Activated T-helper 2 cell treated with anti-CD3 and anti-CD28 coated beads, Interferon-gamma antibody, Interleukin-2, Interleukin-4, amounts not matched to agents 10 μg/mL and 5 μg/mL and 100 μg/mL, durations not matched to agents 14 hours and 24 hours and 36 hours (primary cell): ENCODE measurements at regions of chr12 and their contacts with region 1.

Region 1: DNA sequence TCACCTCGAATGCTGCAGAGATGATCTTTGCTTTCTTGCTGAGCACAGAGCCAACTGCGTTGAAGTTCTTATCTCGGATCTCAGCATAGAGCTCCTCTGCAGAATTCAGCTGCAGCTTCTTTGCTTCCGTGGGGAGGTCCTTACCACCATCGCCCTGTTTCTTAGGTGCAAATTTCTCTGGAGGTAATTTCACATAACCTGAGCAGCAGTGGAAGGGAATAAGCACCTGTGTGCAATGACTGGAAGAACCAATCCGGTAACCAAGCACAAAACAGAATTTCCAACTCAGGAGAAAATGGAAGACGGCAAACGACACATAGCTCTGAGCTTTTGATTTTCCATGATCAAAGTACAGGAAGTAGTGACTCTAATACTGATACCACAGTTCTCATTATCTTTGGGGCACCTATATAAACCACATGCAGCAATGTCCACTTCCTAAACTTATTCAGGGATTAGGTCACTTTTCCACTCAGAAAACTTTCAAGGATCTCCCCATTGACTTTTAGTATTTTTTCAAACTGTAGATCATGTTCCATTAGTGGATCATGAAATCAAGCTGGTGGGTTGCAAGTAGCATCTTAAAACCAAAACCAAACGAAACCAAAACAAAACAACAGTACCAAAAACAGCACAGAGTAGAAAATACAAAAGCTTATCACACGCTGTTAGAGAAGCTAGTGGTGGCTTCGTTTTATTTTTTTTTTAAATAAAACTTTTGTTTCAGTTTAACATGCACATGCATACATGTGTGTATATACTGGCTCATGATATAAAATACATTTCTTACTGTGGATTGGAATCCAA is 18.9 kb upstream of the DIABLO start:
- DNase-seq: peak; percentile 26
- H3K4me3 Mint-ChIP-seq: peak overlapping the region; percentile 75
- H3K27ac Mint-ChIP-seq: peak overlapping the region; percentile 93
- H3K4me1 Mint-ChIP-seq: peaks cover 18% of the 10 kb centered on the region
- H3K27me3 Mint-ChIP-seq: no peaks in the 10 kb centered on the region

Region 2: GRCh38 chr12:122265931-122266771 is 21.4 kb after region 1 on chr12 and contains the start of gene VPS33A:
- intact Hi-C with region 1: loop called (anchors 2 kb)
- DNase-seq: peak; percentile 95
- H3K4me3 Mint-ChIP-seq: peak within 1 kb of the TSS; percentile 96
- H3K27ac Mint-ChIP-seq: peak within 1 kb of the TSS; percentile 99
- H3K4me1 Mint-ChIP-seq: peaks cover 7% of the 10 kb centered on the region
- H3K27me3 Mint-ChIP-seq: no peaks in the 10 kb centered on the region
- total RNA-seq, gene VPS33A: 25.3 and 26.8 TPM in 2 replicates

Region 3: GRCh38 chr12:122486805-122487426 is 242.1 kb after region 1 on chr12:
- intact Hi-C with region 1: no loop called
- DNase-seq: no peak
- H3K4me3 Mint-ChIP-seq: no peak overlapping the region
- H3K27ac Mint-ChIP-seq: peak overlapping the region; percentile 4
- H3K4me1 Mint-ChIP-seq: peaks cover 7% of the 10 kb centered on the region
- H3K27me3 Mint-ChIP-seq: no peaks in the 10 kb centered on the region